B cell (primary cell): ENCODE measurements at regions of chr1 and their contacts with region 1.

Region 1: GRCh38 chr1:32179443-32180185 is at the start of gene TXLNA:
- DNase-seq: peak; percentile 94
- ATAC-seq: peak; percentile 90
- H3K4me3 ChIP-seq: peak within 1 kb of the TSS; percentile 71 to 92 (median 76)
- H3K4me3 Mint-ChIP-seq: peak within 1 kb of the TSS; percentile 96
- H3K27ac ChIP-seq: peak within 1 kb of the TSS; percentile 76 to 90
- H3K27ac Mint-ChIP-seq: peak within 1 kb of the TSS; percentile 99
- H3K4me1 ChIP-seq: peaks cover 21 to 31% of the 10 kb centered on the region in 2 donors
- H3K4me1 Mint-ChIP-seq: peaks cover 35% of the 10 kb centered on the region
- H3K27me3 ChIP-seq: no peaks in the 10 kb centered on the region
- H3K27me3 Mint-ChIP-seq: no peaks in the 10 kb centered on the region
- CTCF ChIP-seq: no peak
- total RNA-seq, gene TXLNA: 38.3 and 38.4 TPM in 2 replicates

Region 2: GRCh38 chr1:32200226-32201010 is 20.8 kb after region 1 on chr1 and contains the start of gene CCDC28B:
- CTCF ChIA-PET with region 1: interaction called, 3 read pairs
- POLR2A ChIA-PET with region 1: interaction called, 11 read pairs
- intact Hi-C with region 1: loop called (anchors 1 kb)
- DNase-seq: peak; percentile 77
- ATAC-seq: peak; percentile 58
- H3K4me3 ChIP-seq: peak within 1 kb of the TSS; percentile 48 to 85 (median 79)
- H3K4me3 Mint-ChIP-seq: peak within 1 kb of the TSS; percentile 88
- H3K27ac ChIP-seq: peak within 1 kb of the TSS; percentile 78 to 88
- H3K27ac Mint-ChIP-seq: peak within 1 kb of the TSS; percentile 86
- H3K4me1 ChIP-seq: peaks cover 17 to 36% of the 10 kb centered on the region in 2 donors
- H3K4me1 Mint-ChIP-seq: peaks cover 33% of the 10 kb centered on the region
- H3K27me3 ChIP-seq: no peaks in the 10 kb centered on the region
- H3K27me3 Mint-ChIP-seq: no peaks in the 10 kb centered on the region
- CTCF ChIP-seq: no peak
- total RNA-seq, gene CCDC28B: 7.8 and 10.2 TPM in 2 replicates

Region 3: GRCh38 chr1:32205401-32206370 is 26.1 kb after region 1 on chr1 and contains the start of gene IQCC:
- CTCF ChIA-PET with region 1: no interaction called
- POLR2A ChIA-PET with region 1: interaction called, 11 read pairs
- intact Hi-C with region 1: loop called (anchors 1 kb)
- DNase-seq: peak; percentile 90
- ATAC-seq: peak; percentile 62
- H3K4me3 ChIP-seq: peak within 1 kb of the TSS in 4 of 5 experiments; percentile 59 to 78 (median 62)
- H3K4me3 Mint-ChIP-seq: peak within 1 kb of the TSS; percentile 88
- H3K27ac ChIP-seq: peak within 1 kb of the TSS in 1 of 2 donors; percentile 46
- H3K27ac Mint-ChIP-seq: peak within 1 kb of the TSS; percentile 68
- H3K4me1 ChIP-seq: peaks cover 42 to 58% of the 10 kb centered on the region in 2 donors
- H3K4me1 Mint-ChIP-seq: peaks cover 60% of the 10 kb centered on the region
- H3K27me3 ChIP-seq: no peaks in the 10 kb centered on the region
- H3K27me3 Mint-ChIP-seq: no peaks in the 10 kb centered on the region
- CTCF ChIP-seq: no peak
- total RNA-seq, gene IQCC: 2.0 and 2.1 TPM in 2 replicates

Region 4: DNA sequence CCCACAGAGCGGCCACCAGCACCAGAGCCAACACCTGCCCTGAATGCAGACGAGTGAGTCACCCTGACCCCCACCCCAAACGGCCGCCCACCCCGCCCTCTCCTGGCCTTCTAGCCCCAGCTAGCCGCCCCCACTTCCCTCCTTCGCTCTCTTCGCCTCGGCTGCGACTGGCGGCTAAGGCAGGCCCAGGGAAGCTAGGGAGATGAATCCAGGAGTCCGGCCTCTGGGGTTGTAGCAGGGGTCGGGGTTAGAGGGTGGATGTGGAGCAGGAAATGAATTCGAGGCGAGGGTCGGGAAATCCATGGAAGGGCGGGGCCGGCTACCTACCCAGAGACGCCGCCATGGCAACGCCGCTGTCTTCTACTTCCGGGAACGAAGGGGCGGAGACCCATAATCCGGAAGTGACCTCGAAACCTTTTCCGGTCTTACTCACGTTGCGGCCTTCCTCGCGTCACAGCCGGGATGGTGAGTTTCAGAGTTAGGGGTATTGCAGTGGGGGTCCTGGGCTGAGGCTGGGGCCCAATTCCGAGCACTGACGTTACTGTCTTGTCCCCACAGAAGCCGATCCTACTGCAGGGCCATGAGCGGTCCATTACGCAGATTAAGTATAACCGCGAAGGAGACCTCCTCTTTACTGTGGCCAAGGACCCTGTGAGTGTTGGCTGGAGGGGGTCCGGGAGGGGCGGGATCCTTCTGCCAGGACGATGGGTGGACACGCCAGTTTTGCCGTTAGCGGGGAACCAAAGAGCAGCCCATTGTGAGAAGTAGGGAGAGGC is 42.6 kb after region 1 on chr1 and contains the starts of genes EIF3I and TMEM234:
- CTCF ChIA-PET with region 1: interaction called, 3 read pairs
- POLR2A ChIA-PET with region 1: no interaction called
- intact Hi-C with region 1: loop called (anchors 1 kb)
- DNase-seq: peak; percentile 94
- ATAC-seq: peak; percentile 86
- H3K4me3 ChIP-seq: peak within 1 kb of the TSS; percentile 61 to 99 (median 93)
- H3K4me3 Mint-ChIP-seq: peak within 1 kb of the TSS; percentile 97
- H3K27ac ChIP-seq: peak within 1 kb of the TSS; percentile 72 to 94
- H3K27ac Mint-ChIP-seq: peak within 1 kb of the TSS; percentile 98
- H3K4me1 ChIP-seq: peaks cover 28 to 30% of the 10 kb centered on the region in 2 donors
- H3K4me1 Mint-ChIP-seq: peaks cover 43% of the 10 kb centered on the region
- H3K27me3 ChIP-seq: no peaks in the 10 kb centered on the region
- H3K27me3 Mint-ChIP-seq: no peaks in the 10 kb centered on the region
- CTCF ChIP-seq: no peak
- total RNA-seq, gene EIF3I: 87.0 and 91.0 TPM in 2 replicates
- total RNA-seq, gene TMEM234: 50.4 and 60.8 TPM in 2 replicates

Region 5: GRCh38 chr1:32907439-32907838 is 727.8 kb after region 1 on chr1:
- CTCF ChIA-PET with region 1: no interaction called
- POLR2A ChIA-PET with region 1: no interaction called
- intact Hi-C with region 1: no loop called
- DNase-seq: no peak
- ATAC-seq: no peak
- H3K4me3 ChIP-seq: no peak overlapping the region
- H3K4me3 Mint-ChIP-seq: no peak overlapping the region
- H3K27ac ChIP-seq: no peak overlapping the region
- H3K27ac Mint-ChIP-seq: no peak overlapping the region
- H3K4me1 ChIP-seq: no peaks in the 10 kb centered on the region
- H3K4me1 Mint-ChIP-seq: no peaks in the 10 kb centered on the region
- H3K27me3 ChIP-seq: peaks cover 0 to 8% (median 3%) of the 10 kb centered on the region in 4 experiments
- H3K27me3 Mint-ChIP-seq: peaks cover 24% of the 10 kb centered on the region
- CTCF ChIP-seq: no peak